Dorsolateral prefrontal cortex (tissue), 120 donors: ENCODE measurements at regions of chr11 and their contacts with region 1.

Region 1: DNA sequence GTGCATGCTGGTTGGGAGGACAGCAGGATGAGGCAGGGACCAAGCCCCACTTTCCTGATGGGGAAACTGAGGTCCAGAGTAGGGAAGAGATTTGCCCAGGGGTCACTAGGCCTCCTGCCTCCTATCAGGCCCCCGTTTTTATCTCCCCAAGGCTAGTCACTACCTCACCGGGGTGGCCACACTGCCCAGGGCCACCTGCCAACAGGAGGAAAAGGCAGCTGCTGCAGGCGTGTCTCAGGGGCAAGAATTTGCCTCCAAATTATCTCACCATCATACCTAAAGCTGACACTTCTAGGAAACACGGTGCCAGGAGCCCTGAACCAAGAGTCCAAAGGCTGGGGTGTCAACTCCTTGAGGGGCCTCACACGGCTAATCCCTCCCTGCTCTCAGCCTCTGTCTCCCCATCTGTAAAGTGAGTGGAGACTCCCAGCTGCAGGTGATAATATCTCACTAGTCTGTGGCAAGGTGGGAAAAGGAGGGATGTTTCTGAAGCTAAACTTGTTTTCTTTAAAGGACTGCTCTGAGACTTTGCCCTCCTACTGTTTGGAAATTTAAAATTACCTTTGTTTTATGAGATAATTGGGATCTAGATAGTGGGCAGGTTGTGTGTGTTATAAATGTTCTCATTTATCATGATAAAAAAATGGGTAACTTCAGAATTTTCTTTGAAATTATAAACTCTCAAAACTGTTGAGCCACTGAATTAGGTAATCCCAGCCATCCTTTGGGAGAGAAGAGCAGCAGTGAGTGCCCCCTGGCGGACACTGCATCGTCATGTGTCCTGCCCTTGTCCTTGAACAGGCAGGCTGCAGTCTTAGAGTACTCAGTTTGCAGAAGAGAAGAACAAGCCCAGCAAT is 60.0 kb downstream of the MYO7A start:
- DNase-seq: peak; percentile 76 to 90 (median 84)
- H3K4me3 ChIP-seq: no peak overlapping the region
- H3K27ac ChIP-seq: no peak overlapping the region
- H3K27me3 ChIP-seq: no peaks in the 10 kb centered on the region
- CTCF ChIP-seq: peak; percentile 74 to 96 (median 92)

Region 2: DNA sequence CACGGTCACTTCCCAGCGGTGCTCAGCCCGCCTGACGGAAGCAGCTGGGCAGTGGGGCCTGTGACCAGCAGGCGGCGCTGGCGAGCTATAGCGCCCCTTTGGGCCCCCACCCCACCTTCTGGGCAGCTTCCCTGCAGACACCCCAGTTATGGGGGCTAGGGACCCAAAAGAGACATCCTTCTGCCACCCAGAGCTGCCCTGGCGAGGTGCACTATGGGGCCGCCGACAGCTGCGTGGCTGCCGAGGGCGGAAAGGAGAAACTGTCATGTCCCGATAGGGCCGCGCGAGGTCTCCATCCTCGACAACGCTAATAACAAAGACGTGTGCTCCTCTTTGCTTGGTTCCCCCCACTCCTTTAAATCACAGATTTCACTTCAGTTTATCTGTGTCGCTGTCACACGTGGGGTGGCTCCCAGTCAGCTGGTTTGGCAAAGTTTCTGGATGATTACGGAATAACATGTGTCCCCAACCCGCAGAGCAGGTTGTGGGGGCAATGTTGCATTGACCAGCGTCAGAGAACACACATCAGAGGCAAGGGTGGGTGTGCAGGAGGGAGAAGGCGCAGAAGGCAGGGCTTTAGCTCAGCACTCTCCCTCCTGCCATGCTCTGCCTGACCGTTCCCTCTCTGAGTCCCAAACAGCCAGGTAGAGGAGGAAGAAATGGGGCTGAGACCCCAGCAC is 60.6 kb before region 1 on chr11:
- intact Hi-C with region 1: loop called (anchors 1 to 2 kb)
- DNase-seq: peak in 9 of 10 donors; percentile 38 to 81 (median 57)
- H3K4me3 ChIP-seq: peak overlapping the region; percentile 22 to 71 (median 56)
- H3K27ac ChIP-seq: peak overlapping the region in 14 of 59 donors; percentile 1 to 72 (median 40)
- H3K27me3 ChIP-seq: no peaks in the 10 kb centered on the region
- CTCF ChIP-seq: peak; percentile 96 to 100 (median 99)

Region 3: GRCh38 chr11:77140231-77140851 is 47.7 kb before region 1 on chr11:
- intact Hi-C with region 1: no loop called
- DNase-seq: no peak
- H3K4me3 ChIP-seq: no peak overlapping the region
- H3K27ac ChIP-seq: peak overlapping the region in 1 of 59 donors; percentile 18
- H3K27me3 ChIP-seq: peaks cover 0 to 17% (median 4%) of the 10 kb centered on the region in 45 donors
- CTCF ChIP-seq: no peak

Region 4: GRCh38 chr11:77207618-77208313 is 19.8 kb after region 1 on chr11:
- intact Hi-C with region 1: no loop called
- DNase-seq: no peak
- H3K4me3 ChIP-seq: no peak overlapping the region
- H3K27ac ChIP-seq: no peak overlapping the region
- H3K27me3 ChIP-seq: no peaks in the 10 kb centered on the region
- CTCF ChIP-seq: no peak

Region 5: DNA sequence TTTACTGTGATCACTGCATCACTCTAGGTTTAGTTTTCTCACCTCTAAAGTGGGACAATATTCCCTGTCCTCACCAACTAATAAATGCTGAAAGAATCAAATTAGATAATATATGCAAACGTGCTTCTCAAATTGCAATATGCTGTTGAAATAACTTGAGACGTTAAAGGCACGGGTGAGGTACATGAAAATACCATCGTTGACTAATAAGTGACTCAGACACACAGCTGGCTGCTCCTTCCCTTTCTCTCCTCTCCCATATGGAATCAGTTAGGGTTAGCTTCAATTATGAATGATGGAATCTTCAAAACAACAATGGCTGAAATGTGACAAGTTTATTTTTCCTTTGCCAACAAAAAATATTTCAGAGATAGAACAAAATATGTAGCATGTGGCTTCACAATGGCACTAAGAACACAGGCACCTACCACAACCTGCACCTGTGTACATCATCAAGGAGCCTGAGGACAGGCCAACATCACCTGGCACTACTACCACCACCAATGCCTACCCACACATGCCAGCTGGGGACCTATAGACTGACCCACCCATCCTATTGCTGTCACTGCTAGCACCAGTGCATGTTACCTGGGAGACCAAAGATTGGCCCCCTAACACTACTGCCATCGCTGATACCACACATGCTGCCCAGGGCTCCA is 99.7 kb after region 1 on chr11:
- intact Hi-C with region 1: no loop called
- DNase-seq: no peak
- H3K4me3 ChIP-seq: no peak overlapping the region
- H3K27ac ChIP-seq: no peak overlapping the region
- H3K27me3 ChIP-seq: peaks cover 0 to 4% (median 0%) of the 10 kb centered on the region in 45 donors
- CTCF ChIP-seq: no peak